CD4-positive, alpha-beta T cell (primary cell): ENCODE measurements at regions of chr9 and their contacts with region 1.

Region 1: DNA sequence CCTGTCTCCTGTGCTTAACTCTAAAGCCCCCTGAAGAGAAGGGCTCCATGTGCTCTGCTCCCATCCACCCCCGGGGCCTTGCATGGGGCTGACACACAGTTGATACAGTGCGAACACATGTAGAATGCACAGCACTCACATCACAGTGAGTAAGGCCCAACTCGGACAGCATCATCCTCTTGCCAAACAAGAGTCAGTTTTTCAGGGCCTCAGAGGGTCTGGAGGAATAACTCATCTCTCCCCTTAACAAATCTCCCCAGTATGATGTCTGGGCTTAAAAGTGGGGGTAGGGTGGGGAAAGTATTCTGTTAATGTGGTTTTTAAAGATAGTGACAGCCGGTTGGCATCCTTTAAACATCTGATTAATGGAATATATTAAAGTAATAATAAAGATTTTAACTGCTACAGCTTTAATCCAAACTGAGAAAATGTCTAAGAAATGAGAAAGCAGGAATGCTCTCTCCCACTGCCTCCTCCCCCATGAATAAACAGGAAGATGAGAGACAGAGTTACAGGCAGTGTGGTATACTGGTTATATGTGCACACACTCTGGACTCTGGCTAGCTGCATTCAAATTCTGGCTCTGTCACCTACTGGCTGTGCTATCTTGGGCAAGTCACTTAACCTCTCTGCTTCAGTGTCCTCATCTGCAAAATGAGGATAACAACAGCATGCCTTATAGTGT is 22.5 kb downstream of the APBA1 start:
- DNase-seq: no peak
- ATAC-seq: no peak
- H3K4me3 ChIP-seq: no peak overlapping the region
- H3K4me3 Mint-ChIP-seq: no peak overlapping the region
- H3K27ac ChIP-seq: no peak overlapping the region
- H3K27ac Mint-ChIP-seq: no peak overlapping the region
- H3K4me1 ChIP-seq: no peaks in the 10 kb centered on the region
- H3K4me1 Mint-ChIP-seq: no peaks in the 10 kb centered on the region
- H3K27me3 ChIP-seq: peaks cover 2 to 10% of the 10 kb centered on the region in 2 experiments
- H3K27me3 Mint-ChIP-seq: peaks cover 18% of the 10 kb centered on the region
- CTCF ChIP-seq: no peak

Region 2: GRCh38 chr9:69627281-69627680 is 22.4 kb before region 1 on chr9:
- CTCF ChIA-PET with region 1: no interaction called
- POLR2A ChIA-PET with region 1: no interaction called
- intact Hi-C with region 1: loop called in 1 of 2 experiments (anchors 2 kb)
- DNase-seq: no peak
- ATAC-seq: no peak
- H3K4me3 ChIP-seq: no peak overlapping the region
- H3K4me3 Mint-ChIP-seq: no peak overlapping the region
- H3K27ac ChIP-seq: no peak overlapping the region
- H3K27ac Mint-ChIP-seq: no peak overlapping the region
- H3K4me1 ChIP-seq: no peaks in the 10 kb centered on the region
- H3K4me1 Mint-ChIP-seq: no peaks in the 10 kb centered on the region
- H3K27me3 ChIP-seq: no peaks in the 10 kb centered on the region
- H3K27me3 Mint-ChIP-seq: peaks cover 33% of the 10 kb centered on the region
- CTCF ChIP-seq: no peak

Region 3: DNA sequence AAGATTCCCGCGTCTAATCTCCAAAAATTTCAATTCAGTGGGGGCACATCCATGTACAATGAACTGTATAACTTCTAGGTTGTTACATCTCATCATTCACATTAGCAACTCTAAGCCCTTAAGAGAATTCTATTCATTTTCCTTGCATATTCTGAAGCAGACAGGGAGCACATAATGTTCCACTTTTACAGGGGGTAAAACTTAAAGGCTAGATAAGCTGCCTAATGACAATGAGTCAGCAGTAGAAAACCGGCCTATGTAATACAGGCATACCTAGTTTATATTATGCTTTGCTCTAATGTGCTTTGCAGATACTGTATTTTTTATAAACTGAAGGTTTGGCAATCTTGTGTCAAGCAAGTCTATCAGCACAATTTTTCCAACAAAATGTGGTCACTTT is 69.7 kb after region 1 on chr9:
- CTCF ChIA-PET with region 1: no interaction called
- POLR2A ChIA-PET with region 1: no interaction called
- intact Hi-C with region 1: loop called in 1 of 2 experiments (anchors 10 kb)
- DNase-seq: no peak
- ATAC-seq: no peak
- H3K4me3 ChIP-seq: no peak overlapping the region
- H3K4me3 Mint-ChIP-seq: no peak overlapping the region
- H3K27ac ChIP-seq: no peak overlapping the region
- H3K27ac Mint-ChIP-seq: no peak overlapping the region
- H3K4me1 ChIP-seq: no peaks in the 10 kb centered on the region
- H3K4me1 Mint-ChIP-seq: no peaks in the 10 kb centered on the region
- H3K27me3 ChIP-seq: no peaks in the 10 kb centered on the region
- H3K27me3 Mint-ChIP-seq: no peaks in the 10 kb centered on the region
- CTCF ChIP-seq: no peak

Region 4: DNA sequence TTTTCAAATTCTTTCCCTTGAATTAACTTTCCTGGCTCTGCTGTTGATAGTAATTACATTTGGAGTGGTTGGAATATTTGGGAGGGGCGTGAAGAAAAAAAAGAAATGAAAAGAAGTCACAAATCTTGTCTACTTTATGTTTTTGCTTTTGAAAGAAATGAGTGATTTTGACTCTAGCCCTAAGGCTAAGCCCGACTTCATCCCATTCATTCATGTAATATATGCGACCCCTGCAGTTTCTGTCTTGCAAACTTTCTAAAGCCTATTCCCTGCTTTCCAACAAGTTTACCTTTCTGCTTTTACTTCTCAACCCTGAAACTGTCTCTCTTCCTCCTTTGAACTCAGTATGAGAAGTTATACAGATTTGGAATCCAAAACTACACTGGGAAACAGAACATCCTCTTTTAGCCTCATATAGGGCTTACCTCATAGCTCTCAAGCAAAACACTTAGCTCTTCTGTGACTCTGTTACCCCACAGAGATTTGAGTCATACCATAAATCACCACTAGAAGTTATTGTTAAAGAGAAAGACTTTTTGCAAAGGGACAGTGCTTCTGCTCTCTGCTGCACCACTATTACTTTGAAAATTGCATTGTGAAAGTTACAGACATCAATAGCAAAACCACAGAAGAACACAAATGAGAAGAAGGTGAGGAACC is 172.5 kb after region 1 on chr9:
- CTCF ChIA-PET with region 1: no interaction called
- POLR2A ChIA-PET with region 1: no interaction called
- intact Hi-C with region 1: no loop called
- DNase-seq: peak in 2 of 14 experiments; percentile 17 to 21
- ATAC-seq: no peak
- H3K4me3 ChIP-seq: no peak overlapping the region
- H3K4me3 Mint-ChIP-seq: no peak overlapping the region
- H3K27ac ChIP-seq: no peak overlapping the region
- H3K27ac Mint-ChIP-seq: no peak overlapping the region
- H3K4me1 ChIP-seq: peaks cover 7% of the 10 kb centered on the region
- H3K4me1 Mint-ChIP-seq: peaks cover 34% of the 10 kb centered on the region
- H3K27me3 ChIP-seq: peaks cover 4 to 7% of the 10 kb centered on the region in 2 experiments
- H3K27me3 Mint-ChIP-seq: peaks cover 17% of the 10 kb centered on the region
- CTCF ChIP-seq: no peak